ENCODE measurements at regions of chr11 and their contacts with region 1.

Region 1: GRCh38 chr11:73647459-73648100 is 1.2 kb downstream of the PLEKHB1 start:
- DNase-seq: peak; percentile 63 to 83
- H3K4me3 ChIP-seq: peak overlapping the region in 2 of 3 donors; percentile 48 to 60
- H3K27ac ChIP-seq: peak overlapping the region; percentile 48 to 71
- H3K4me1 ChIP-seq: no peaks in the 10 kb centered on the region
- H3K27me3 ChIP-seq: no peaks in the 10 kb centered on the region
- CTCF ChIP-seq: no peak
- POLR2A ChIP-seq: no peak

Region 2: GRCh38 chr11:73429121-73429750 is 218.3 kb before region 1 on chr11:
- intact Hi-C with region 1: loop called (anchors 10 kb)
- DNase-seq: no peak
- H3K4me3 ChIP-seq: no peak overlapping the region
- H3K27ac ChIP-seq: no peak overlapping the region
- H3K4me1 ChIP-seq: no peaks in the 10 kb centered on the region
- H3K27me3 ChIP-seq: no peaks in the 10 kb centered on the region
- CTCF ChIP-seq: no peak
- POLR2A ChIP-seq: no peak

Region 3: DNA sequence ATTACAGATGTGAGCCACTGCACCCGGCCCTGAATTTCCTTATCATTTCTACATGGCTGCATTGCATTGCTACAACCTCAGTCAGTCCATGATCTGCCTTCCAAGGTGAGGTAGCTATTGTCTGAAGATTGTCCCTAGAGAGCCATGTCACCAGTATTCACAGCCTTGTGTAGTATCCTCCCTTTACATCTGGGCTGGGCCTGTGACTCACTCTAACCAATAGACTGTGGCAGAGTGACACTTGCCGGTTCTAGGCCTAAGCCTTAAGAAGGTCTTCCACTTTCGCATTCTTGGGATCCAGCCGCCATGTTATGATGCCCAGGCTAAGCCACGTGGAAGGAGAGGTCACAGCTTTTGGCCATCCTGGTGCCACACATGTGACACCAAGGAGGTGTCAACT is 11.3 kb before region 1 on chr11:
- intact Hi-C with region 1: loop called (anchors 2 kb)
- DNase-seq: no peak
- H3K4me3 ChIP-seq: no peak overlapping the region
- H3K27ac ChIP-seq: no peak overlapping the region
- H3K4me1 ChIP-seq: no peaks in the 10 kb centered on the region
- H3K27me3 ChIP-seq: no peaks in the 10 kb centered on the region
- CTCF ChIP-seq: no peak
- POLR2A ChIP-seq: no peak